ENCODE measurements at regions of chr6 and their contacts with region 1.

Region 1: GRCh38 chr6:12637960-12638641 is 78.5 kb upstream of the PHACTR1 start:
- DNase-seq: peak; percentile 80
- ATAC-seq: peak; percentile 86
- H3K4me3 ChIP-seq: no peak overlapping the region
- H3K27ac ChIP-seq: no peak overlapping the region
- H3K4me1 ChIP-seq: 0 out of 2 replicates have a peak, but pooled peaks cover 6% of the 10 kb centered on the region
- H3K27me3 ChIP-seq: peaks cover 14% of the 10 kb centered on the region; the same call in 1 of the 2 replicates
- CTCF ChIP-seq: peak; percentile 91

Region 2: DNA sequence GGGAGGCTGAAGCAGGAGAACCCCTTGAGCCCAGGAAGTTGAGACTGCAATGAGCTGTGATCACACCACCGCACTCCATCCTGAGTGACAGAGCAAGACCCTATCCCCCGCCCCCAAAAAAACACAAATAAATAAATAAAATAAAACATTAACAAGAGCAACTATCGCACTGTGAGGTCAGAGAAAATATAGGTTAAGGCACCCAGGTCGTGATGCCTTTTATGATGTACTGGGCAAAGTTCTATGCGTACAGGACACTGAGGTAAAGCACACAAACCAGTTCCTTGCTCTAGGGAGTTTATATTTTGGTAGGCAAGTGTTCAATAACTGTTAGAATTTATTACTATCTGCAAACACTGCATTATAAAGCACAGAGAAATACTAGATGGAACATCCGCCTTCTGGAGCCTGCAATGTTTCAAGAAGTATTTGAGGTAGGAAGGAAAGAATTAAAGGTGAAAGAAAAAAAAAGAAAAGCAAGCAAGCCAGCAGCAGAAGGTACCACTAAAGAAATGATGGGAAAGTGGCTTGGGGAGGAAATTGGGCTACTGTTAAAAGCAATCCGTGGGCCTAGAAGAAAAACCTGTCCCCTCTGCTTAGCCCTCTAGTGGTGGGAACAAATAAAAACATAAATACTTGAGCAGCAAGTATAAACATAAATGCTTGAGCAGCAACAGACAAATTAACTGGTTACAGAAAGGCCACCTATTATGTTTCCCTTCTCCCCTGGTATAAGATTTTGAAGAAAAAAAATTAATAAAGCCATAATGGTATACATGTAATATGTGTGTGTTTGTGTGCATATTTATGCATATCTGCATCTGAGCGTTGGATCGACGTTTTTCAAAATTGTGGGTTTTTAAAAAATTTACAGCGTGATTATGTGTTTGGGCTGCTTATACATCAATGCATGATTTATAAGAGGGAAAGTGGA is 206.5 kb after region 1 on chr6:
- CTCF ChIA-PET with region 1: no interaction called
- POLR2A ChIA-PET with region 1: no interaction called
- intact Hi-C with region 1: loop called (anchors 1 kb)
- DNase-seq: peak; percentile 52
- ATAC-seq: no peak
- H3K4me3 ChIP-seq: no peak overlapping the region
- H3K27ac ChIP-seq: no peak overlapping the region
- H3K4me1 ChIP-seq: no peaks in the 10 kb centered on the region
- H3K27me3 ChIP-seq: peaks cover 58% of the 10 kb centered on the region
- CTCF ChIP-seq: peak; percentile 81

Region 3: DNA sequence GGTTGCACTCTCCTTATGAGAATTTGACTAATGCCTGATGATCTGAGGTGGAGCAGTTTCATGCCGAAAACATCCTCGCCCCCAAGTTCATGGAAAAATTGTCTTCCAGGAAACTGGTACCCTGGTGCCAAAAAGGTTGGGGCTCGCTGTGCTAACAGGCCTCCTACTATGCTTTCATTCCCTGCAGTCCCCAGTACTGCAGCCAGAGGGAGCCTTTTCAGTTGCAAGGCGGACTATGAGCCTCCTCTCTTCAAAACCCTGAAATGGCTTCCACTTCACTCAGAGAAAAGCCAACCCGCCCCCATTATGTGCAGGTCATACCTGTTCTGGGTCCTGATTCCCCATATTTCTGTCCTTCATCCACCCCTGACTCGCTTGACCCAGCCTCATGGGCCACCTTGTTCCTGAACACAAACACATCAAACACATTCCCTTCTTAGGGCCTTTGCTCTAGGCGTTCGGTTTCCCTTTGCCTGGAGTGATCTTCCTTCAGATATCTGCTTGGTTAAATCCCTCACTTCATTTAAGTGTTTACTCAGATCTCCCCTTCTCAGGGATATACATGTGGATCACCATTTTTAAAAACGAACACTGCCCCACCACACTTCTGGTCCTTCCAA is 252.2 kb after region 1 on chr6:
- CTCF ChIA-PET with region 1: interaction called, 9 read pairs
- POLR2A ChIA-PET with region 1: no interaction called
- intact Hi-C with region 1: loop called (anchors 1 kb)
- DNase-seq: peak; percentile 40
- ATAC-seq: no peak
- H3K4me3 ChIP-seq: no peak overlapping the region
- H3K27ac ChIP-seq: no peak overlapping the region
- H3K4me1 ChIP-seq: no peaks in the 10 kb centered on the region
- H3K27me3 ChIP-seq: peaks cover 29% of the 10 kb centered on the region
- CTCF ChIP-seq: peak; percentile 69

Measured in PC-3 (cell line).